Activated naive CD8-positive, alpha-beta T cell treated with anti-CD3 and anti-CD28 coated beads, Interleukin-2, amount 10 ng/mL, durations not matched to agents 7 days and 5 days (primary cell): ENCODE measurements at regions of chr17 and their contacts with region 1.

Region 1: DNA sequence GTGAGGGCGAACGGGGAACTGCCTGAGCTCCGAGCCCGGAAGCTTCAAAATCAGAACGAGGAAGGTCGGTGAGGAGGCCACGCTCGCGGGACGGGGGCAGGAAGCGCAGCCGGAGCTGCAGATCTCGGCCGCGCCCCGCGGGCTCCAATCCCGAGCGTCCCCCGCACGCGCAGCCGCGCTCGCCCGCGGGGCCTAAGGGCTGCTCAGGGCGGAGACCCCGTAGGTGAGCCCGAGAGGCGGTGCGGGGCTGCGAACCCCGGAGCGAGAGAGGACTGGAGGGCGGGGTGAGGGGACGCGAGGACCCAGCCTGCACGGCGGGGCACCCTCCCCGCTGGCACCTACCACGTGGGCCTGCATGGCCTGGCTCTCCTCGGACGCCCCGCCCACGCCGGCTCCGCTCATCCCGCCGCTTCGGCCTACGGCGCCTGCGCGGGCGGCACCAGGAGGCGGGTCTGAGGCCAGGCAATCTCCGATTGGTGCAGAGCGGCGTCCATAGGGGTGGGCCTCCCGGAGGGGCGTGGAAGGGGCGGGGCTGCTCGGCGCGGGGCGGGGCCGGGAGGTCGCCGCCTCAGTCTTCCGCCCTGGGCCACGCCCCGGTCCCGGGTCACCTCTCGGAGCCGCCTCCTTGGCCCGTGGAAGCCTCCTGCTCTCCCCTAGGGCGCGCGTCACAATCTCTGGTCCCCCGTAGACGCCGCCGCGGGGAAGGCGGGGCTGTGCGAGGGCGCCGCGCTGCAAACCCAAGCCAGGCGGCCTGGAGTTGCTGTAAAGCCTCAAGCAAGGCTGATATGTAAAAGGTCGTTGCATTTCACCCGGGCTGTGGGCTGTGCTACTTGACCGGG is 27.8 kb upstream of the METRNL start:
- DNase-seq: peak; percentile 99
- ATAC-seq: peak; percentile 89
- H3K4me3 Mint-ChIP-seq: peak overlapping the region; percentile 86
- H3K27ac Mint-ChIP-seq: peak overlapping the region; percentile 95
- H3K4me1 Mint-ChIP-seq: peaks cover 33% of the 10 kb centered on the region
- H3K27me3 Mint-ChIP-seq: no peaks in the 10 kb centered on the region

Region 2: DNA sequence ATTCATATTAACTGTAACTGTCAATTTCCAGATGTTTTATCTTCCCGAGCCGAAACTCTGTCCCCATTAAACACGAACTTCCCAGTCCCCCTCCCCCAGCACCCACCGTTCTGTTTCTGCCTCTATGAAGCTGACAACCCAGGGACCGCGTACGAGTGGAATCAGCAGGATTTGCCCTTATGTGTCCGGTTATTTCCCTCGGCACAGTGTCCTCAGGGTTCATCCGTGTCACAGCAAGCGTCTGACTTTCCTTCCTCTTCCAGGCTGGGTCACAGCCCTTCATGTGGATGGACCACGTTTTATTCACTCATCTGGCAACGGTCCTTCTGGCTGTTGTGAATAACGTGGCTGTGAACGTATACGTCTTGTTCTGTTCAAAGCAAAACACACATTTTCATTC is 59.1 kb after region 1 on chr17:
- POLR2A ChIA-PET with region 1: no interaction called
- DNase-seq: no peak
- ATAC-seq: no peak
- H3K4me3 Mint-ChIP-seq: no peak overlapping the region
- H3K27ac Mint-ChIP-seq: no peak overlapping the region
- H3K4me1 Mint-ChIP-seq: no peaks in the 10 kb centered on the region
- H3K27me3 Mint-ChIP-seq: peaks cover 4% of the 10 kb centered on the region

Region 3: GRCh38 chr17:83200202-83200699 is 148.6 kb after region 1 on chr17:
- POLR2A ChIA-PET with region 1: interaction called, 11 read pairs
- DNase-seq: peak; percentile 76
- ATAC-seq: peak; percentile 65
- H3K4me3 Mint-ChIP-seq: peak overlapping the region; percentile 86
- H3K27ac Mint-ChIP-seq: peak overlapping the region; percentile 97
- H3K4me1 Mint-ChIP-seq: peaks cover 40% of the 10 kb centered on the region
- H3K27me3 Mint-ChIP-seq: no peaks in the 10 kb centered on the region